Activated CD4-positive, alpha-beta T cell treated with anti-CD3 and anti-CD28 coated beads, Interleukin-2, amount 10 ng/mL, durations not matched to agents 24 days and 14 days (primary cell): ENCODE measurements at regions of chr2 and their contacts with region 1.

Region 1: GRCh38 chr2:200471324-200471848 is 38.5 kb downstream of the KCTD18 start:
- DNase-seq: peak; percentile 77
- H3K4me3 Mint-ChIP-seq: no peak overlapping the region
- H3K27ac Mint-ChIP-seq: no peak overlapping the region
- H3K4me1 Mint-ChIP-seq: peaks cover 30% of the 10 kb centered on the region
- H3K27me3 Mint-ChIP-seq: no peaks in the 10 kb centered on the region

Region 2: GRCh38 chr2:199979832-199980628 is 491.4 kb before region 1 on chr2:
- intact Hi-C with region 1: loop called (anchors 1 kb)
- DNase-seq: peak; percentile 94
- H3K4me3 Mint-ChIP-seq: no peak overlapping the region
- H3K27ac Mint-ChIP-seq: no peak overlapping the region
- H3K4me1 Mint-ChIP-seq: peaks cover 23% of the 10 kb centered on the region
- H3K27me3 Mint-ChIP-seq: no peaks in the 10 kb centered on the region

Region 3: GRCh38 chr2:200373973-200374416 is 97.4 kb before region 1 on chr2:
- intact Hi-C with region 1: loop called (anchors 1 kb)
- DNase-seq: peak; percentile 86
- H3K4me3 Mint-ChIP-seq: peak overlapping the region; percentile 84
- H3K27ac Mint-ChIP-seq: peak overlapping the region; percentile 80
- H3K4me1 Mint-ChIP-seq: peaks cover 52% of the 10 kb centered on the region
- H3K27me3 Mint-ChIP-seq: no peaks in the 10 kb centered on the region

Region 4: GRCh38 chr2:200447139-200447855 is 24.1 kb before region 1 on chr2:
- intact Hi-C with region 1: loop called (anchors 2 kb)
- DNase-seq: no peak
- H3K4me3 Mint-ChIP-seq: peak overlapping the region; percentile 40
- H3K27ac Mint-ChIP-seq: peak overlapping the region; percentile 86
- H3K4me1 Mint-ChIP-seq: peaks cover 24% of the 10 kb centered on the region
- H3K27me3 Mint-ChIP-seq: no peaks in the 10 kb centered on the region

Region 5: GRCh38 chr2:200454927-200455801 is 16.2 kb before region 1 on chr2:
- intact Hi-C with region 1: loop called (anchors 1 kb)
- DNase-seq: peak; percentile 53
- H3K4me3 Mint-ChIP-seq: peak overlapping the region; percentile 18
- H3K27ac Mint-ChIP-seq: peak overlapping the region; percentile 77
- H3K4me1 Mint-ChIP-seq: peaks cover 19% of the 10 kb centered on the region
- H3K27me3 Mint-ChIP-seq: no peaks in the 10 kb centered on the region